ENCODE measurements at regions of chr20 and their contacts with region 1.

Region 1: DNA sequence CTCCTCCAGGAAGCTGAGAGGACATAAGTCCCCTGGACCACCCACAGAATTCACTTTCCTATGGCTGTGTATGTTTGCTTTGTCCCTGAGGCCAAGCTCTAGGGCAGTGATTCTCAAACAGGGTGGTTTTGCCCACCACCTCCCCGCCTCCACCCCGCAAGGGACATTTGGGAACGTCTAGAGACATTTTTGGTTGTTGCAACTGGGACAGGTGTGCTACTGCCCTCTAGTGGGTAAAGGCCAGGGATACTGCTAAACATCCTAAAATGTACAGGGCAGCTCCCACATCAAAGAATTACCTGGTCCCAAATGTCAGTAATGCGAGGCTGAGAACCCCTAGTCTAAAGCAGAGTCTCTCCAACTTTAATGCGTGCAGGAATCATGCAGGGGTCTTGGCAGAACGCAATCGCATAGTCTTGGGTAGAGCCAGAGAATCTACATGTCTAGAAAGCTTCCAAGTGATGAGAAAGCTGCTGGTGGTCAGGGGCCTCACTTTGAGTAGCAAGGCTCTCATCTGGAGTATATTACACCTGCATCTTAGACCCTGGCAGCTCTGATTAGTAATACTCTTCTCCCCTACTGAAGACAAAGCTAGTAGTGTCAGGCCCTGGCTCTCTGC is 5.1 kb downstream of the KCNS1 start:
- DNase-seq: peak; percentile 55 to 61
- ATAC-seq: peak; percentile 58 to 81; a peak in 5 of 6 replicates
- H3K4me3 ChIP-seq: no peak overlapping the region
- H3K27ac ChIP-seq: no peak overlapping the region
- H3K4me1 ChIP-seq: no peaks in the 10 kb centered on the region
- CTCF ChIP-seq: peak; percentile 90
- EP300 ChIP-seq: no peak
- POLR2A ChIP-seq: no peak
- RAD21 ChIP-seq: peak; percentile 74 to 83

Region 2: DNA sequence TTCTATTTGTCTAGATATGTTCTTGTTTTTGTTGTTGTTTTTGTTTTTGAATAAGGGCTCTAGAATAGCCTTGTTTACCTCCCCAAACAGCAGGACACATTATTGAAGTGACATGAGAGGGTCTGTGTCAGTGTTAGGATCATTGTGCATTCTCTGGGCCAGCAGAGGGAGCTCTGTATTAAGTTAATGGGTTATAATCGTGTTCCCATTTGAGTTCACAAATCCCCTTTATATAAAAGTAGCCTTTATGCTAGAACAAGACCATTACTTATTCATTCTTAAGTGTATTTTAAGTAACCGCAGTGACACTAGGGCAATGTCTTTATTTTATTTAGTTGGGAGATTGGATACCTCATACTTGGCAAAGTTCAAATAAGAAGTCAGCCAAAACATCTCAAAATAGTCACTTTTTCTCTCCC is 84.7 kb before region 1 on chr20:
- CTCF ChIA-PET with region 1: interaction called, 101 read pairs
- POLR2A ChIA-PET with region 1: no interaction called
- DNase-seq: peak; percentile 46 to 47
- ATAC-seq: peak; percentile 90 to 91
- H3K4me3 ChIP-seq: no peak overlapping the region
- H3K27ac ChIP-seq: no peak overlapping the region
- H3K4me1 ChIP-seq: peaks cover 12% of the 10 kb centered on the region
- CTCF ChIP-seq: peak; percentile 92
- EP300 ChIP-seq: no peak
- POLR2A ChIP-seq: no peak
- RAD21 ChIP-seq: peak; percentile 74 to 82

Region 3: GRCh38 chr20:45028424-45029136 is 67.3 kb before region 1 on chr20:
- CTCF ChIA-PET with region 1: interaction called, 16 read pairs
- POLR2A ChIA-PET with region 1: interaction called, 3 read pairs
- DNase-seq: no peak
- ATAC-seq: no peak
- H3K4me3 ChIP-seq: no peak overlapping the region
- H3K27ac ChIP-seq: no peak overlapping the region
- H3K4me1 ChIP-seq: no peaks in the 10 kb centered on the region
- CTCF ChIP-seq: no peak
- EP300 ChIP-seq: no peak
- POLR2A ChIP-seq: no peak
- RAD21 ChIP-seq: no peak

Region 4: DNA sequence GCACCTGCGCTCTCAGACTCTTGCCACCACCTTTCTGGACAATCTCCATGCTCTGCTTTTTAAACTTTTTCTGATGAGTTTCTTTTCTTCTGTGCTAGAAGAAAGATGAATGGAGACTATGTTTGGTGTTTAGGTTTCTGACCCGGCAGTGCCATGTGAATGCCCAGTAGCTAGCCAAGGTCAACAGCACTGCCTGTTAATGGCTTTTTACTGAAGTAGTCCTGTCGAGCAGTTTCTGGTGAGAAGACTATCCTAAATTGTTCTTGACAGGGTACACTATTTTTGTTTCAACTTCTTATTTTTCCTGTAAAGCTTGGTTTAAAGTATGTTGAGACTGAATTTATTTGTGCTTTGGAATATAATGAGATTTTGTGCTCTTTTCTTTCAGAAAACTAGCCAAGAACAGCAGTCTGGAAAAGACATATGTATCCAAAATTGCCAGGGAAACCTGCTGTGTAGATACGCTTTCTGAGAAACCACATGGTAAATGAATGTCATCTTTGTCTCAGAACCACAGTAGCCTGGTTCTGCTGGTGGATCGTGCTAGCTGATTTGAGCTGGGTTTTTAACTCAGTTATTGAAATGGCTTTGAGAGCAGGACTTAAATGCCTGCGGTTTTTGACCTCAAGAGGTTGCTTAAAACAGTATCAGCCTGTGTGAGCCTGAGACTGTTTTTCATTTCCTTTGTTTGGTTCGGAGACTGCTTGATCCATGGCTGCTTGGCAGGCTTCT is 43.0 kb before region 1 on chr20:
- CTCF ChIA-PET with region 1: interaction called, 98 read pairs
- POLR2A ChIA-PET with region 1: no interaction called
- DNase-seq: no peak
- ATAC-seq: no peak
- H3K4me3 ChIP-seq: no peak overlapping the region
- H3K27ac ChIP-seq: no peak overlapping the region
- H3K4me1 ChIP-seq: 0 out of 3 replicates have a peak, but pooled peaks cover 5% of the 10 kb centered on the region
- CTCF ChIP-seq: no peak
- EP300 ChIP-seq: no peak
- POLR2A ChIP-seq: no peak
- RAD21 ChIP-seq: no peak

Region 5: GRCh38 chr20:45077559-45077958 is 18.3 kb before region 1 on chr20:
- CTCF ChIA-PET with region 1: interaction called, 36 read pairs
- POLR2A ChIA-PET with region 1: no interaction called
- DNase-seq: no peak
- ATAC-seq: no peak
- H3K4me3 ChIP-seq: no peak overlapping the region
- H3K27ac ChIP-seq: no peak overlapping the region
- H3K4me1 ChIP-seq: no peaks in the 10 kb centered on the region
- CTCF ChIP-seq: no peak
- EP300 ChIP-seq: no peak
- POLR2A ChIP-seq: no peak
- RAD21 ChIP-seq: no peak

Region 6: GRCh38 chr20:45111799-45112471 is 16.1 kb after region 1 on chr20:
- CTCF ChIA-PET with region 1: interaction called, 155 read pairs
- POLR2A ChIA-PET with region 1: no interaction called
- DNase-seq: peak in 1 of 2 experiments; percentile 20
- ATAC-seq: peak in 1 of 2 experiments; percentile 59; a peak in 3 of 6 replicates
- H3K4me3 ChIP-seq: no peak overlapping the region
- H3K27ac ChIP-seq: no peak overlapping the region
- H3K4me1 ChIP-seq: no peaks in the 10 kb centered on the region
- CTCF ChIP-seq: peak; percentile 60
- EP300 ChIP-seq: no peak
- POLR2A ChIP-seq: no peak
- RAD21 ChIP-seq: peak; percentile 44 to 45; a peak in 4 of 5 replicates

Region 7: DNA sequence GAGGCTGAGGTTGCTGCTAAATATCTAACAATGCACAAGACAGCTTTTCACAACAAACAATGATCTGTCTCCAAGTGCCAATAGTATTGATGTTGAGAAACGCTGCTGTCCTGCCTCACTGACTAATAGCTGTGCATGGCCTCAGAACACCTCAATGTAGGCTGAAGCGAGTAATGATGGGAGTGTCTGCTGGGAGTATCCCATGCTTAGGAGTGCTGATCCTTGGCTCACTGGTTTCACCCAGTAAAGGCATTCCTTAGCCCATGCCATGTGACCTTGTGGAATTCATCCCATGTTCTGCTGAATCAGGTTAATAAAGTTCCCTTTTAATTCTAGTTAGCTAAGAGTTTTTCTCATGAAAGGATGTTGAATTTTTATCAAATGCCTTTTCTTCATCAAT is 32.2 kb after region 1 on chr20:
- CTCF ChIA-PET with region 1: no interaction called
- POLR2A ChIA-PET with region 1: no interaction called
- DNase-seq: no peak
- ATAC-seq: peak in 1 of 2 experiments; percentile 62; a peak in 1 of 6 replicates
- H3K4me3 ChIP-seq: no peak overlapping the region
- H3K27ac ChIP-seq: no peak overlapping the region
- H3K4me1 ChIP-seq: no peaks in the 10 kb centered on the region
- CTCF ChIP-seq: no peak
- EP300 ChIP-seq: no peak
- POLR2A ChIP-seq: no peak
- RAD21 ChIP-seq: no peak

Region 8: GRCh38 chr20:45268531-45268930 is 172.7 kb after region 1 on chr20:
- CTCF ChIA-PET with region 1: interaction called, 11 read pairs
- POLR2A ChIA-PET with region 1: no interaction called
- DNase-seq: no peak
- ATAC-seq: no peak
- H3K4me3 ChIP-seq: no peak overlapping the region
- H3K27ac ChIP-seq: no peak overlapping the region
- H3K4me1 ChIP-seq: no peaks in the 10 kb centered on the region
- CTCF ChIP-seq: no peak
- EP300 ChIP-seq: no peak
- POLR2A ChIP-seq: no peak
- RAD21 ChIP-seq: no peak

Measured in A549 (cell line).